OCI-LY7 (cell line): ENCODE measurements at regions of chr17 and their contacts with region 1.

Region 1: DNA sequence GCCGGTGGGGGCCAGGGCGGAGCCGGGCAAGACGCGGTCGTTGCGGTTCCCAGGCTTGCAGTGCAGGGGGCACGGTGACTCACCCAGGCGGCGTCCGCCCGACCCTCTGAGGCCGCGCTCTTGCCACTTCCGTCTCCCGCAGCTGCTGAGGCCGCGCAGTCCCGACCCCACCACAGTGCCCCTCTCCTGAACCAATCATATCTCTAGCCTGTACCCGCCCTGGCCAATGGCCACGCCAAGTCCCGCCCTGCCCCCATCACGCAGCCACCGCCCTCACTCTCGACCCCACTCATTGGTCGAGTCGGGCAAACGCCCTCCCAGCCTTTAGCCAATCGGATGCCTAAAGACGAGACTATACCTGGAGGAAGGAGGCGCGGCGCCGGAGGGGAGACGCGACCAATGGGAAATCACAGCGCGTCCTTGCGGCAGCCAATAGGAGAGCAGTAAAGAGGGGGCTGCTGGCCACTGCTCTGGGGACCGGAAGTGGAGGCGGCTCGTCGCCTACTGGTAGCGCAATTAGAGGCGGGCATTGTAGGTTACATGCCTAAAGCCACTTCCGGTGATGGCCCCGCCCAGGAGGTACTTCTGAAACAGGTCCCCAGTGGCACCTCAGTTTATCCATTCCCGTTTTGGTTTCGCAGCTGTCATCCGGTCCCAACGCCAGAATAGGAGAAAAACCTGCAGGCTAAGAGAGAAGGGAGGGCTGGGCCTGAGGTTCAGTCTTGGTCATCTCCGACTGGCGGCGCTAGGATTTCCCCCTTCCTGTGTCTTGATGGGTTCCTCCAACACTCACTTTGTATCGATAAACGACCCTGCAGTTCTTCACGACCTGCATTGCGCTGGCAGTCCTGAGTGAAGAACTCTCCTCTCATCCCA is 3.5 kb upstream of the MTMR4 start:
- DNase-seq: peak; percentile 100
- H3K4me3 ChIP-seq: peak overlapping the region; percentile 86
- H3K27ac ChIP-seq: peak overlapping the region; percentile 88
- H3K4me1 ChIP-seq: peaks cover 58% of the 10 kb centered on the region
- CTCF ChIP-seq: no peak

Region 2: GRCh38 chr17:58382108-58382871 is 135.7 kb before region 1 on chr17:
- CTCF ChIA-PET with region 1: no interaction called
- POLR2A ChIA-PET with region 1: no interaction called
- intact Hi-C with region 1: no loop called
- DNase-seq: peak; percentile 58
- H3K4me3 ChIP-seq: peak overlapping the region; percentile 14
- H3K27ac ChIP-seq: peak overlapping the region; percentile 22
- H3K4me1 ChIP-seq: peaks cover 15% of the 10 kb centered on the region
- CTCF ChIP-seq: no peak

Region 3: GRCh38 chr17:58565780-58566189 is 47.8 kb after region 1 on chr17:
- CTCF ChIA-PET with region 1: no interaction called
- POLR2A ChIA-PET with region 1: no interaction called
- intact Hi-C with region 1: loop called (anchors 1 kb)
- DNase-seq: peak; percentile 45
- H3K4me3 ChIP-seq: peak overlapping the region; percentile 38
- H3K27ac ChIP-seq: peak overlapping the region; percentile 80
- H3K4me1 ChIP-seq: peaks cover 80% of the 10 kb centered on the region
- CTCF ChIP-seq: no peak

Region 4: GRCh38 chr17:58658804-58659713 is 141.1 kb after region 1 on chr17:
- CTCF ChIA-PET with region 1: no interaction called
- POLR2A ChIA-PET with region 1: no interaction called
- intact Hi-C with region 1: loop called (anchors 1 kb)
- DNase-seq: peak; percentile 92
- H3K4me3 ChIP-seq: peak overlapping the region; percentile 65
- H3K27ac ChIP-seq: peak overlapping the region; percentile 74
- H3K4me1 ChIP-seq: peaks cover 6% of the 10 kb centered on the region
- CTCF ChIP-seq: no peak; the same call in 1 of the 2 replicates

Region 5: DNA sequence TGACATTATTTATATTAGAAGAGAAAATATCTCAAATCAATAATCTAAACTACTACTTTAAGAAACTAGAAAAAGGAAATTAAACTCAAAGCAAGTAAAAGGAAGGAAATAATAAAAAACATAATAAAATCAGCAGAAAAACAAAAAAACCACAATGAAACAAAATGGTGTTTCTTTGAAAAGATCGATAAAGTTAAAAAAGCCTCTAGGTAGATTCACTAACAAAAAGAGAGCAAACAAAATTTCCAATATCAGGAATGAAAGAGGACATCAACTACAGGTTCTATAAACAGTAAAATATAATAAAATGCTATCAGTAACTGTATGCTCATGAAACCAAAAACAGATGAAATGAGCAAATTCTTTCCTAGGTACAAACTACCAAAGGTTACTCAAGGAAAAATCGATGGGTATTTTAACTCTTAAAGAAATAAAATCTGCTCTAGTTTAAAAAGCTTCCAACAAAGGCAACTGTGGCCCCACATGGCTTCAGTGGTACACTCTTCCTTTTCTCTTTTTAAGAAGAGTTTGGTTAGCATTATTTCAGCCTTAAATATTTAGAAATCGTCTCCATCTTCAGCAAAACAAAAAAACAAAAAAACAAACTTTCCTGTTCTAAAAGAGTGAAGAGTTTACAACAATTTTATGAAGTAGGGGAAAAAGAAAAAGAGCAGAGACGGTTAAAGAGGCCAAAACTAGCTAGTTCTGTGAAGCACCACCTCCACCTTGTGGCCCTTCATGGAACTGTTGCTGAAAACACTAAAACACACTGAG is 486.6 kb after region 1 on chr17:
- CTCF ChIA-PET with region 1: interaction called, 3 read pairs
- POLR2A ChIA-PET with region 1: no interaction called
- intact Hi-C with region 1: loop called (anchors 1 kb)
- DNase-seq: peak; percentile 70
- H3K4me3 ChIP-seq: no peak overlapping the region
- H3K27ac ChIP-seq: peak overlapping the region; percentile 32
- H3K4me1 ChIP-seq: peaks cover 40% of the 10 kb centered on the region
- CTCF ChIP-seq: peak; percentile 98